ENCODE measurements at regions of chr11 and their contacts with region 1.

Region 1: DNA sequence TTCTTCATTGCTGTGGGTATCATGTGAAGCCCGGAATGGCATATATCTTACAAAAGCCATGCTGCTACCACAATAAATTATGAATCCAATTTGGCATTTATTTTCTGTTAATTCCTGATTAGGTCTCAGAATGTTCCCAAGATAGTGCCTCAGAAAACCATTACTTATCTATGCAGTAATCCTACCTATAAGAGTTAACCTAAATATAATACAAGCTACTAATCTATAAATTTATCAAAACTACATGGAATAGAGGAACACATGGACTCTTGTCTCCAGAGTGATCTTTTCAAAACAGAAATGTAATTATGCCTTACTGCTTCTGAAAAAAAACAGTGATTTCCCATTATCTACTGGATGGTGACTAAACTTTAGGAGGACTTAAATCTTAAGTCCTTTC is 687.8 kb upstream of the ANO5 start:
- DNase-seq: no peak
- H3K4me3 ChIP-seq: no peak overlapping the region
- H3K27ac ChIP-seq: no peak overlapping the region
- H3K4me1 ChIP-seq: no peaks in the 10 kb centered on the region
- H3K27me3 ChIP-seq: peaks cover 0 to 4% of the 10 kb centered on the region in 2 donors
- CTCF ChIP-seq: no peak
- POLR2A ChIP-seq: no peak

Region 2: GRCh38 chr11:21552911-21553310 is 47.8 kb after region 1 on chr11:
- intact Hi-C with region 1: loop called (anchors 2 kb)
- DNase-seq: no peak
- H3K4me3 ChIP-seq: no peak overlapping the region
- H3K27ac ChIP-seq: no peak overlapping the region
- H3K4me1 ChIP-seq: no peaks in the 10 kb centered on the region
- H3K27me3 ChIP-seq: no peaks in the 10 kb centered on the region
- CTCF ChIP-seq: no peak
- POLR2A ChIP-seq: no peak

Measured in breast epithelium (tissue), 4 donors.